Activated T-helper 2 cell treated with anti-CD3 and anti-CD28 coated beads, Interferon-gamma antibody, Interleukin-2, Interleukin-4, amounts not matched to agents 10 μg/mL and 5 μg/mL and 100 μg/mL, durations not matched to agents 14 hours and 24 hours and 36 hours (primary cell): ENCODE measurements at regions of chr15 and their contacts with region 1.

Region 1: DNA sequence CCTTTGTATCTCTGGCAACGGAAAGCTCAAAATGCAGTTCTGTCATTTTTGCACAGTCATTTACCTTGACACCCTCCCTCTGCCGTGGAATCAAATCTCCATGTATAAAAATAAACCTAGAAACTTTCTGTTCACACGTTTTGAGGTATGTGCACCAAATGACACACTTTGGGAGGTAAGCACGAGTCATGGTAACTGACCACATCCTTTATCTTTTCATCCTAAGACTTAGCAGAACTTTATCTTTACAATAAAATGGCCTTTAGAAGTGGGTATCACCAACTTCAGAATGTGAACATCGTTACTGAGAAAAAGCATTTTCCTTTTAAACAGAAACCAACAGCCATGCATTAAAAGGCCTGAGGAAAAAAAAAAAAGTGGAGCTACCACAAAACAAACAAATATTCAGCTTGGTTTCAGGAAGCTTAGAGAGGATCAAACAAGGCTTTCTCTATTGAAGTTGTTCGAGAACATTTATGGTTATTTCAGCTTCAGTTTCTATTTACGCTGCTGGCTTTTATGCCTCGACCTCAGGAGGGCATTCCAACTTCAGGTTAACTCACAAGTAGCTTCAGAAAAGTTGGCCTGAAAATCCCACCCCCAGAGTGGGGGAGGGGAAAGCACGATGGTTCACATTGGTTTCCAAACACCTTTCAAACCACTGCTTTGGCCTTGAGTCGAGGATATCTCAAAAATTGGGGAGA is 171.1 kb upstream of the ICE2 start:
- DNase-seq: peak; percentile 20
- H3K4me3 Mint-ChIP-seq: peak overlapping the region; percentile 50
- H3K27ac Mint-ChIP-seq: peak overlapping the region; percentile 71
- H3K4me1 Mint-ChIP-seq: peaks cover 27% of the 10 kb centered on the region
- H3K27me3 Mint-ChIP-seq: peaks cover 22% of the 10 kb centered on the region

Region 2: DNA sequence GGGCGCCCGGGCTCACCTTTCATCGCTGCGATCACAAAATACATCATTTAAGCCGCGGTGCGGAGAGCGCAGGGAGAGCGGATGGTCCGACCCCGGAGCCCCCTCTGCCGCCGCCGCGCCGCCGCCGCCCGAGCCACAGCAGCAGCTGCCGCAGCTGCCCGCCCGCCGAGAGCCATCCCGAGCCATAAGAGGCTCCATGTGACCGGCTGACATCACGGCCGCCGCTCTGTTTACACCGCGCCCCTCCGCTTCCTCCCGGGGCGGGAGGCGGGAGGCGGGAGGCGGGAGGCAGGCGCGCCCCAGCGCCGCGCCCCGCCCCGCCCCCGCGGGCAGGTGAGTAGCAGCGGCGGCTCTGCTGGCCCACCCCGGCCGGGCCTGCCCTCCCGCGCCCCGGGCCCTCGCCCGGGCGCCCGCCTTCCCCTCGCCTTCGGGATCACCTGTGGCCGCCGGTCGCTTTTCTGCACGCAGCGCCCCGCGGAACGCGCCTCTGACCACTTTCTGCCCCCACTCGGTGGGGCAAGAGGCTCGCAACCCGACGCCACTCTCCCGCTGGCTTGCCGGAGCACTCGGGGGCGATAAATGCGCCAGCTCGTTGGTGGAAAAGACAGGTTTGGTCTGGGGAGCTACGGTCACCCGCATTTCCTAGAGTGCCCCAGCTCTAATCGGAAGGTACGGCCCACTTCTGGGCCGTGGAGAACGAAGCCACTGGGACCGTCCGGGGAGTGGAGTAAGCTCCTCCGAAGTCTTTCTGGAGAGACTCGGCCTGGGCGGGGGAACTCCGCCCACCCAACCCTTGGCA is 57.4 kb before region 1 on chr15:
- intact Hi-C with region 1: loop called (anchors 5 kb)
- DNase-seq: peak; percentile 81
- H3K4me3 Mint-ChIP-seq: peak overlapping the region; percentile 77
- H3K27ac Mint-ChIP-seq: peak overlapping the region; percentile 64
- H3K4me1 Mint-ChIP-seq: peaks cover 39% of the 10 kb centered on the region
- H3K27me3 Mint-ChIP-seq: peaks cover 48% of the 10 kb centered on the region

Region 3: GRCh38 chr15:60798821-60799220 is 148.8 kb after region 1 on chr15:
- intact Hi-C with region 1: loop called (anchors 1 kb)
- DNase-seq: no peak
- H3K4me3 Mint-ChIP-seq: no peak overlapping the region
- H3K27ac Mint-ChIP-seq: no peak overlapping the region
- H3K4me1 Mint-ChIP-seq: peaks cover 39% of the 10 kb centered on the region
- H3K27me3 Mint-ChIP-seq: peaks cover 9% of the 10 kb centered on the region

Region 4: DNA sequence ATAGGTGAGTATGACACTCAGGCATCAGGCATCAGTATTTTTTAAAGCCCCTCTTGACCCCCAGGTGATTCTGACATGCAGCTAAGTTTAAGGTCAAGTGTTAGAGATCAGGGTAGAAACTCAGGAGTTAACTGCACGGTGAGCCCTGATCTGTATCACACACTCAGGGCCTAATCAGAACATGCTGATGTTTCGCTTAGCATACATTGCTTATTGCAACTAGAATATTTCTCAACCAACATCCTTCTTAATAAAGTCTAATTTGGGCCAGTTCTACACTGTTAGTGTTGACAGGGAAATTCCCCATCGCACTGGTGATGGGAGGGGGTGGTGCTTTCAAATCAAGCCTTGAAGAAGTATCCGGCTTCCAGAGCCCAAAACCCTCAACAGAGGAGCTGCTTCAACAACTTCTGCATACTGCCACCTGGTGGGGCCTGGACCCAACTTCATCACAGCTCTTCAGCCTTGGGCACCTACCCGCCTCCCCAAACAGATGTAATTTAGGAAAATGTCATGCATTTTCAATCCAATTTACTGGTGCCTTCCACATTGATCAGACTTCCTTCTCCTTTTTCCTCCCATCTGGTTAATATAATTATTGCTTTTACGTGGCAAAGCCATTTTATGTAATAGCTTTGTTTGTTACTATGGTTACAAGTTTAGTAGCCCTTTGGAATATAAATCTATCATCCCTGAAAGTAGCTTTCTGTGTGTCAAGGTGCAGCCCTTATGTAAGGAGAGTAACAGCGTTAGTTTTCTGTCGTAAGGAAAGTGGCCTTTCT is 266.9 kb after region 1 on chr15:
- intact Hi-C with region 1: loop called (anchors 5 kb)
- DNase-seq: peak; percentile 69
- H3K4me3 Mint-ChIP-seq: no peak overlapping the region
- H3K27ac Mint-ChIP-seq: no peak overlapping the region
- H3K4me1 Mint-ChIP-seq: peaks cover 16% of the 10 kb centered on the region
- H3K27me3 Mint-ChIP-seq: peaks cover 27% of the 10 kb centered on the region